PC-9 (cell line): ENCODE measurements at regions of chr11 and their contacts with region 1.

Region 1: DNA sequence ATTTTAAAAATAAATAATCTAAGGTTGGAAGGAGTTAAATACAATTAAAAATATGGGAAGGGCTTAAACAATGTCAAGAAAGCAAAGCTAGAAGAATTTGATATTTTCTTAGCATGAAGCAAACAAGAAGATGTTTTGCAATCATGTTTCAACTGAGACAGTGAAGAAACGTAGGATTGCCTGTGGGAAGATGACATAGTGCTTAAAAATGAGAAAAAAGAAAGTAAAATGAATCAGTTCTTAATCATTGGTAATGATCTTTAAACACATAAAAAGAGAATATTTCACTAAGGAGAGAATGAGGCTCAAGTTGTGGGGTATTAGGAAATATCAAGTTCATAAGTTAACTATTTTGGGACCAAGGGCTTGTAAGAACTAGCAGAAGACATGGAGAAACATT is 855.0 kb downstream of the METTL15 start:
- DNase-seq: no peak
- H3K4me3 ChIP-seq: no peak overlapping the region
- H3K27ac ChIP-seq: no peak overlapping the region
- H3K4me1 ChIP-seq: no peaks in the 10 kb centered on the region
- H3K27me3 ChIP-seq: no peaks in the 10 kb centered on the region
- CTCF ChIP-seq: no peak

Region 2: GRCh38 chr11:28860893-28861292 is 102.3 kb before region 1 on chr11:
- CTCF ChIA-PET with region 1: no interaction called
- POLR2A ChIA-PET with region 1: interaction called, 15 read pairs
- intact Hi-C with region 1: no loop called
- DNase-seq: no peak
- H3K4me3 ChIP-seq: no peak overlapping the region
- H3K27ac ChIP-seq: no peak overlapping the region
- H3K4me1 ChIP-seq: no peaks in the 10 kb centered on the region
- H3K27me3 ChIP-seq: no peaks in the 10 kb centered on the region
- CTCF ChIP-seq: no peak

Region 3: DNA sequence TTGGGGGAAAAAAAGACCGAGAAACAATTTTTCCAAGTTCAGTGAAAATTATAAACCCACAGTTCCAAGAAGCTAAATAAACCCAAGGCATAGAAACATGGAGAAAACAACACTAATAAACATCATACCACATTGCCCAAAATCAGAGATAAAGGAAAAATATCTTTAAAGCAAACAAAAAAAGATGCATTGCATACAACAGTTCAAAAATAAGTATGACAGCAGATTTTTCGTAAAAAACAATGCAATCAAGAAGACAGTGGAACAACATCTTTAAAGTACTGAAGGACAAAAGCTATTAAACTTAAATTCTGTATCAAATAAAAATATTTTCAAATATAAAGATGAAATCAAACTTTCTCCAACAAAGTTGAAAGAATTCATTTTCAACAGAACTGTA is 66.3 kb after region 1 on chr11:
- CTCF ChIA-PET with region 1: no interaction called
- POLR2A ChIA-PET with region 1: no interaction called
- intact Hi-C with region 1: no loop called
- DNase-seq: no peak
- H3K4me3 ChIP-seq: no peak overlapping the region
- H3K27ac ChIP-seq: no peak overlapping the region
- H3K4me1 ChIP-seq: no peaks in the 10 kb centered on the region
- H3K27me3 ChIP-seq: no peaks in the 10 kb centered on the region
- CTCF ChIP-seq: no peak